ENCODE measurements at regions of chr4 and their contacts with region 1.

Region 1: DNA sequence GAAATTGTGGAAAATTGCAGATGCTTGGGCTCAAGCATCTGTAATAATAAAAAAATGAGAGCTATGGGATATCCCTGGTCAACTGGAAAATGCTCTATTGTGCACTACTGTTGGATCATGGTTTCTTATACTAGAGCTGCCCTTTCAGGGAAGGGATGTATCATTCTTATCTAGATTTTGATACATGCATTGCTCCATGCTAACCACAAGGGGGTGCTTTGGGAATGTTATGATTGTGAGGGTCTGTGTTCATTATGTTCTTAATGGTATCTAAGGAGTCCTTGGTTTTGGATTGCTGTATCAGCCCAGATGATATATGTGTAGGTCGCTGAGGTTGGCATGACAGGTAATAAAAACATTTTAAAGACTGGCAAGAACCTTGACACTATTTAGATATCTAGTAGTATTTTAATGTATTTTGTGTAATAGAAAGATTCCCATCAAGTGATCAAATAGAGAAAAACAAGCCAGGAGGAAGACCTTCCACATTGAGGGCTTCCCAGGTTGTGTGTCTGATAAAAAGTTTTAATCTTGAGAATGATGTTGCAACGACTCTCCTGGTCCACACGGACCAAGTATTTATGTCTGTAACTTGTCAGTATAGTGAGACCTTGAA is 49.2 kb upstream of the TLR2 start:
- DNase-seq: peak in 2 of 14 experiments; percentile 47 to 49
- ATAC-seq: peak; percentile 61
- H3K4me3 ChIP-seq: no peak overlapping the region
- H3K4me3 Mint-ChIP-seq: no peak overlapping the region
- H3K27ac ChIP-seq: no peak overlapping the region
- H3K27ac Mint-ChIP-seq: peak overlapping the region; percentile 37
- H3K4me1 ChIP-seq: no peaks in the 10 kb centered on the region
- H3K4me1 Mint-ChIP-seq: no peaks in the 10 kb centered on the region
- H3K27me3 ChIP-seq: no peaks in the 10 kb centered on the region
- H3K27me3 Mint-ChIP-seq: no peaks in the 10 kb centered on the region
- CTCF ChIP-seq: peak; percentile 67

Region 2: GRCh38 chr4:153750197-153750817 is 115.5 kb after region 1 on chr4:
- CTCF ChIA-PET with region 1: interaction called, 4 read pairs
- POLR2A ChIA-PET with region 1: no interaction called
- intact Hi-C with region 1: loop called (anchors 1 kb)
- DNase-seq: peak; percentile 26 to 78 (median 50)
- ATAC-seq: peak; percentile 80
- H3K4me3 ChIP-seq: no peak overlapping the region
- H3K4me3 Mint-ChIP-seq: no peak overlapping the region
- H3K27ac ChIP-seq: no peak overlapping the region
- H3K27ac Mint-ChIP-seq: no peak overlapping the region
- H3K4me1 ChIP-seq: peaks cover 6% of the 10 kb centered on the region
- H3K4me1 Mint-ChIP-seq: peaks cover 13% of the 10 kb centered on the region
- H3K27me3 ChIP-seq: peaks cover 0 to 4% of the 10 kb centered on the region in 2 experiments
- H3K27me3 Mint-ChIP-seq: peaks cover 4% of the 10 kb centered on the region
- CTCF ChIP-seq: peak; percentile 83